PC-3 (cell line): ENCODE measurements at regions of chr11 and their contacts with region 1.

Region 1: GRCh38 chr11:447923-448731 is 2.0 kb upstream of the PTDSS2 start:
- DNase-seq: peak; percentile 83
- ATAC-seq: peak; percentile 62
- H3K4me3 ChIP-seq: peak overlapping the region; percentile 79
- H3K27ac ChIP-seq: peak overlapping the region; percentile 74
- H3K4me1 ChIP-seq: peaks cover 27% of the 10 kb centered on the region
- H3K27me3 ChIP-seq: no peaks in the 10 kb centered on the region
- CTCF ChIP-seq: peak; percentile 93

Region 2: GRCh38 chr11:304915-305843 is 142.9 kb before region 1 on chr11:
- CTCF ChIA-PET with region 1: no interaction called
- POLR2A ChIA-PET with region 1: no interaction called
- intact Hi-C with region 1: loop called (anchors 10 kb)
- DNase-seq: peak; percentile 66
- ATAC-seq: peak; percentile 13; the same call in 1 of the 2 replicates
- H3K4me3 ChIP-seq: no peak overlapping the region
- H3K27ac ChIP-seq: no peak overlapping the region
- H3K4me1 ChIP-seq: peaks cover 12% of the 10 kb centered on the region
- H3K27me3 ChIP-seq: no peaks in the 10 kb centered on the region
- CTCF ChIP-seq: peak; percentile 61

Region 3: GRCh38 chr11:369336-370018 is 78.7 kb before region 1 on chr11 and contains the start of gene B4GALNT4:
- CTCF ChIA-PET with region 1: interaction called, 3 read pairs
- POLR2A ChIA-PET with region 1: no interaction called
- intact Hi-C with region 1: loop called (anchors 2 kb)
- DNase-seq: peak; percentile 43
- ATAC-seq: peak; percentile 40
- H3K4me3 ChIP-seq: peak within 1 kb of the TSS; percentile 69
- H3K27ac ChIP-seq: no peak within 1 kb of the TSS
- H3K4me1 ChIP-seq: peaks cover 6% of the 10 kb centered on the region; the same call in 1 of the 2 replicates
- H3K27me3 ChIP-seq: no peaks in the 10 kb centered on the region
- CTCF ChIP-seq: no peak
- total RNA-seq, gene B4GALNT4: 52.9 and 87.9 TPM in 2 replicates

Region 4: DNA sequence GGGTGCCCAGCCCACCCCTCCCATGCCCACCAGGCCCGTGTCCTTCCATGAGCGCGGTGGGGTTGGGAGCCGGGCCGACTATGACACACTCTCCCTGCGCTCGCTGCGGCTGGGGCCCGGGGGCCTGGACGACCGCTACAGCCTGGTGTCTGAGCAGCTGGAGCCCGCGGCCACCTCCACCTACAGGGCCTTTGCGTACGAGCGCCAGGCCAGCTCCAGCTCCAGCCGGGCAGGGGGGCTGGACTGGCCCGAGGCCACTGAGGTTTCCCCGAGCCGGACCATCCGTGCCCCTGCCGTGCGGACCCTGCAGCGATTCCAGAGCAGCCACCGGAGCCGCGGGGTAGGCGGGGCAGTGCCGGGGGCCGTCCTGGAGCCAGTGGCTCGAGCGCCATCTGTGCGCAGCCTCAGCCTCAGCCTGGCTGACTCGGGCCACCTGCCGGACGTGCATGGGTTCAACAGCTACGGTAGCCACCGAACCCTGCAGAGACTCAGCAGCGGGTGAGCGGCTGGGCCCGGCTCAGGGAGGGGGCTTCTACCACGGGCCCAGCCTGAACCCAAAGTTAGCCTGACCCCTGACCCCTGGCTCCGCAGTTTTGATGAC is 51.1 kb before region 1 on chr11:
- CTCF ChIA-PET with region 1: interaction called, 4 read pairs
- POLR2A ChIA-PET with region 1: no interaction called
- intact Hi-C with region 1: loop called (anchors 10 kb)
- DNase-seq: no peak
- ATAC-seq: no peak
- H3K4me3 ChIP-seq: no peak overlapping the region
- H3K27ac ChIP-seq: no peak overlapping the region
- H3K4me1 ChIP-seq: peaks cover 19% of the 10 kb centered on the region
- H3K27me3 ChIP-seq: no peaks in the 10 kb centered on the region
- CTCF ChIP-seq: no peak

Region 5: DNA sequence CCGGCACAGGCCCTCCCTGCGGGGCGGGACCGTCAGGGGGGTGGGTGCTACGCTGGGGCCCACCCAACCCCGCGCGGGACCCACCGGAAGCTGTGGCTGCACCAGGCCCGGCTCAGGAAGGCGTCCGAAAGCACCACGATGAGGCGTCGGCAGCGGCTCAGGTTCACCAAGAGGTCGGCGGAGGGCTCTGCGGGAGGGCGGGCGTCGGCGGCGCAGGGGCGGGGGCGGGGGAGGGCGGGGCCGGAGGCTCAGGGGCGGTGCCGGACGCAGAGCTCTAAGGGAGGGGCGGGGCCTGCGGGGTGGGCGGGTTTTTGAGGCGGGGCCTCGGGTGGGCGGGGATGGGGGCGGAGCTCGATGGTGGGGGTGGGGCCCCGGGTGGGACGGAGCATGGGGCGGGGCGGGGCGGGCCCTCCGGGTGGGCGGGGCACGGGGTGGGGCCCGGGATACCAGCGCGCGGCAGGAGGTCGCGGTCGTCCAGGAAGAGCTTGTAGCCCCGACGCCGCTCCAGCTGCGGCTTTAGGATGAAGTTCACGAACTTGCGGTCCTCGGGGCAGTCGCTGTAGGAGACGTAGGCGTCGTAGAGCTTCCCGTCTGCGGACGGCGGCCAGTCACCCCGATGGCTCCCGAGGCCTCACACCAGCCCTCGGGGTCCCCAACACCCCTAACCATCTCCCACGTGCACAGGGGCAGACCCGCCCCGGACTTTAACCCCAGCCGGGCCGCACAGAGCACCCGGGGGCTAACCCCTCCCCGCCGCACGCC is 41.0 kb before region 1 on chr11:
- CTCF ChIA-PET with region 1: interaction called, 10 read pairs
- POLR2A ChIA-PET with region 1: no interaction called
- intact Hi-C with region 1: no loop called
- DNase-seq: peak; percentile 68
- ATAC-seq: peak; percentile 65
- H3K4me3 ChIP-seq: peak overlapping the region; percentile 43; the same call in 1 of the 2 replicates
- H3K27ac ChIP-seq: no peak overlapping the region
- H3K4me1 ChIP-seq: peaks cover 7% of the 10 kb centered on the region; the same call in 1 of the 2 replicates
- H3K27me3 ChIP-seq: no peaks in the 10 kb centered on the region
- CTCF ChIP-seq: no peak

Region 6: GRCh38 chr11:413120-414081 is 34.7 kb before region 1 on chr11:
- CTCF ChIA-PET with region 1: interaction called, 8 read pairs
- POLR2A ChIA-PET with region 1: no interaction called
- intact Hi-C with region 1: loop called (anchors 2 kb)
- DNase-seq: no peak
- ATAC-seq: no peak
- H3K4me3 ChIP-seq: no peak overlapping the region
- H3K27ac ChIP-seq: no peak overlapping the region
- H3K4me1 ChIP-seq: peaks cover 27% of the 10 kb centered on the region
- H3K27me3 ChIP-seq: no peaks in the 10 kb centered on the region
- CTCF ChIP-seq: no peak

Region 7: GRCh38 chr11:477052-477715 is 29.1 kb after region 1 on chr11:
- CTCF ChIA-PET with region 1: no interaction called
- POLR2A ChIA-PET with region 1: no interaction called
- intact Hi-C with region 1: no loop called
- DNase-seq: no peak
- ATAC-seq: no peak
- H3K4me3 ChIP-seq: no peak overlapping the region
- H3K27ac ChIP-seq: no peak overlapping the region
- H3K4me1 ChIP-seq: no peaks in the 10 kb centered on the region
- H3K27me3 ChIP-seq: no peaks in the 10 kb centered on the region
- CTCF ChIP-seq: no peak

Region 8: DNA sequence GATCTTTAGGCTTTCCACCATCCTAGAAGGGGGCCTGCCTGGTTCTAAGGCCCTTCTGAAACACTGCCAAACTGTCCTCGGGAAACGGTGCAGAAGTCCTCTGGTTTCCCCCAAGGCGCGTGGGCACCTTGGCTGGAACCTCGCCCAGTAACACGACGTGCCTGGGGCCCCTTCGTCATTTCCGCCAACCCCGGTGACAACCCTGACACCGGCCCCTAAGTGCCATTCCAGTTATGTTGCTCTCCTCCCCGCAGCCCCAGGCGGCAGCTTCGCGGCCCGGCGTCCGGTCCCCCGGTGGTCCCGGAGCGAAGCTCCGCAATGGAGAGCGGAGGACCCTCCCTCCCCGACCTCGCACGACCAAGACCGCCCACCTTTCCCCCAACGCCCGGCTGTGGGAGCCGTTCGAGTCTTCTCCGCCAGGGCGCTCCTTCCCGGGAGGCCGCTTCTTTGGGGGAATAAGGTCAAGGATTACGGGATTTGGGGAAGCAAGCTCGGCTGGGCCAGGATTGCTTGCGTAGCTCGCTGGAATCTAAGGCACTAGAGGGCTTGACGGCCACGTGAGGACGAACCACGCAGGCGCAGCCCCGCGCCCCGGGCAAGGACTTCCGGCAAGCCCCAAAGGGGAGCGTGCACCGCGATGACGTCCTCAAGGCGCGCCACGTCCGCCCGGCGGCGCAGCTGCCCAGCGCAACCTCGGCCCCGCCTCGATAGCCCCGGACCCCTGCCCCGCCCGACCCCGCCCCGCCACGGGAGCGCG is 58.3 kb after region 1 on chr11:
- CTCF ChIA-PET with region 1: no interaction called
- POLR2A ChIA-PET with region 1: no interaction called
- intact Hi-C with region 1: loop called (anchors 2 kb)
- DNase-seq: peak; percentile 95
- ATAC-seq: peak; percentile 72
- H3K4me3 ChIP-seq: peak overlapping the region; percentile 88
- H3K27ac ChIP-seq: peak overlapping the region; percentile 100
- H3K4me1 ChIP-seq: peaks cover 12% of the 10 kb centered on the region
- H3K27me3 ChIP-seq: no peaks in the 10 kb centered on the region
- CTCF ChIP-seq: no peak

Region 9: GRCh38 chr11:568306-569157 is 120.4 kb after region 1 on chr11:
- CTCF ChIA-PET with region 1: no interaction called
- POLR2A ChIA-PET with region 1: no interaction called
- intact Hi-C with region 1: no loop called
- DNase-seq: peak; percentile 96
- ATAC-seq: peak; percentile 90
- H3K4me3 ChIP-seq: peak overlapping the region; percentile 80
- H3K27ac ChIP-seq: no peak overlapping the region
- H3K4me1 ChIP-seq: peaks cover 23% of the 10 kb centered on the region; the same call in 1 of the 2 replicates
- H3K27me3 ChIP-seq: no peaks in the 10 kb centered on the region
- CTCF ChIP-seq: no peak